T-cell (primary cell): ENCODE measurements at regions of chr6 and their contacts with region 1.

Region 1: DNA sequence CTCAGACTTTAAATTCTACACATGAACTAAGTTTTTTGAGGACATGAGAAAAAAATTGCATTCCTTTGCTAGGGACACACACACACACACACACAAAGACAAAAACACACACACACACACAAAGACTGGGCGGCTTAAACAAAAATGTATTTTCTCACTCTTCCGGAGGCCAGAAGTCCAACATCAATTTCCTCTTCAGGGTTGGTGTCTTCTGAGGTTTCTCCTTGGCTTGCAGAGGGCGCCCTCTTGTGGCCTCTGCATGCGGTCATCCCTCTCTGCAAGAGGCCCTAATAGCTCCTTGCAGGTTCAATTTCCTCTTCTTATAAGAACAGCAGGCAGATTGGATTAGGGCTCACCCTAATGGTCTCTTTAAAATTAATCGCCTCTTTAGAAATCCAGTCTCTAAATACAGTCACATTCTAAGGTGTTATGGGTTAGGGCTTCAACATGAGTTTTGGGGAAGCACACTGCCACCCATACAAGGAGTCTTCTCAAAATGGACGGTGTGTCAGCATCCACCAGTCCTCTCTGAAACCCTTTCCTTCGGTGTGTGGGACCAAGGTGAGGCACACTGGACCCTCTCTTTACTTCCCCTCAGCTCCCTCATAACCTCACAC is 61.4 kb downstream of the GPR6 start:
- DNase-seq: peak; percentile 56 to 89 (median 73)
- ATAC-seq: peak; percentile 82 to 85 (median 83)
- H3K4me3 ChIP-seq: peak overlapping the region; percentile 48 to 68
- H3K4me3 Mint-ChIP-seq: peak overlapping the region; percentile 77 to 90 (median 88)
- H3K27ac ChIP-seq: peak overlapping the region; percentile 80
- H3K27ac Mint-ChIP-seq: peak overlapping the region; percentile 97 to 98
- H3K4me1 ChIP-seq: peaks cover 0 to 17% of the 10 kb centered on the region in 2 experiments
- H3K4me1 Mint-ChIP-seq: peaks cover 10 to 16% (median 15%) of the 10 kb centered on the region in 3 donors
- H3K27me3 ChIP-seq: no peaks in the 10 kb centered on the region
- H3K27me3 Mint-ChIP-seq: no peaks in the 10 kb centered on the region

Region 2: DNA sequence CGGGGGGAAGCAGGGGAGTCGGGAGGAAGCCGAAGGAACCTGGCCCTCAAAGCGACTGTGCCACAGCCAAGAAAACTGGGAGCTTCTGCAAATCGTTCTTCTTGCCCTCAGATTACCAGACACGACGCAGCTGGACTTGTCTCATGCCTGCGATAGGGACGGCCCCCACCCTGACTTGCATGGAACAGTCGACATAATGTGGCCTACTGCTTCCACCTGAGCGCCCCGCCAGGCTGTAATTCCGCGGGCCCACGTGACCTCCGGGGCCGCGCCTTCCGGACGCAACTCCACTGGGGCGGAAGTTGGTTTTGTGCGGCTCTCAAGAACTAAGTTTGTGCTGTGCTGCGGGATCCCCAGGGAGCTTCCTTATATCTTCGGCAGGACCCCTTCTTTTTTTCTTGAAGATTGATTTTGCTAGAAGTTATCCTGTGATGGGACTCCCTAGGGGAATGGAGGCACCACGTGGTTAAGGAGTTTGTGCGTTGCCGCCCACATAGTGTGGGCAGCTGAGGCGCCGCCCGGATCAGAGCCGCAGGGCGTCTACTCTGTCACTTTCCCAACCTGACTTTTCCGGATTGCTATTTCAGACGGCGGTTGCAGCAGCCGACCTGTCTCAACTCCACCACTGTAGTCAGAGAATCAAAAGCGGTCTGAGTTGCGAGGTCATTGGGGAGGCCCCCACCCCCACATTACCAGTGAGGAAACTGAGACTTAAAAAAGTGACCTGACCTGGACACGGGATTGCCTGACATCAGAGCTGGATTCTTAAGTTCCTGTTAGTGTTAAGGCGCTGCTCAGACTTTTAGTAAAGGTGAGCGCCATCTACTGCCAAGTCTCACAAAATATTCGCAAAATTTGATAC is 656.7 kb before region 1 on chr6:
- CTCF ChIA-PET with region 1: interaction called, 9 to 10 read pairs
- POLR2A ChIA-PET with region 1: no interaction called
- DNase-seq: peak; percentile 88 to 96 (median 93)
- ATAC-seq: peak; percentile 75 to 83 (median 80)
- H3K4me3 ChIP-seq: peak overlapping the region; percentile 94 to 98
- H3K4me3 Mint-ChIP-seq: peak overlapping the region; percentile 87 to 98 (median 94)
- H3K27ac ChIP-seq: peak overlapping the region; percentile 95
- H3K27ac Mint-ChIP-seq: peak overlapping the region; percentile 99
- H3K4me1 ChIP-seq: peaks cover 16 to 30% of the 10 kb centered on the region in 2 experiments
- H3K4me1 Mint-ChIP-seq: peaks cover 45 to 53% (median 48%) of the 10 kb centered on the region in 3 donors
- H3K27me3 ChIP-seq: no peaks in the 10 kb centered on the region
- H3K27me3 Mint-ChIP-seq: no peaks in the 10 kb centered on the region

Region 3: GRCh38 chr6:109705258-109705657 is 334.2 kb before region 1 on chr6:
- CTCF ChIA-PET with region 1: interaction called, 11 to 60 read pairs
- POLR2A ChIA-PET with region 1: no interaction called
- DNase-seq: peak; percentile 41 to 87 (median 67)
- ATAC-seq: peak; percentile 87 to 96 (median 90)
- H3K4me3 ChIP-seq: no peak overlapping the region
- H3K4me3 Mint-ChIP-seq: no peak overlapping the region
- H3K27ac ChIP-seq: no peak overlapping the region
- H3K27ac Mint-ChIP-seq: peak overlapping the region in 1 of 2 donors; percentile 11
- H3K4me1 ChIP-seq: peaks cover 3 to 4% of the 10 kb centered on the region in 2 experiments
- H3K4me1 Mint-ChIP-seq: peaks cover 30 to 42% (median 33%) of the 10 kb centered on the region in 3 donors
- H3K27me3 ChIP-seq: no peaks in the 10 kb centered on the region
- H3K27me3 Mint-ChIP-seq: no peaks in the 10 kb centered on the region

Region 4: GRCh38 chr6:110179401-110180227 is 140.1 kb after region 1 on chr6 and contains the start of gene WASF1:
- CTCF ChIA-PET with region 1: interaction called in 1 of 2 experiments, 13 read pairs
- POLR2A ChIA-PET with region 1: interaction called in 1 of 2 experiments, 9 read pairs
- DNase-seq: peak; percentile 82 to 94 (median 86)
- ATAC-seq: peak; percentile 86 to 92 (median 88)
- H3K4me3 ChIP-seq: peak within 1 kb of the TSS; percentile 86 to 88
- H3K4me3 Mint-ChIP-seq: peak within 1 kb of the TSS in 2 of 3 donors; percentile 79 to 84
- H3K27ac ChIP-seq: peak within 1 kb of the TSS; percentile 79
- H3K27ac Mint-ChIP-seq: peak within 1 kb of the TSS; percentile 29 to 42
- H3K4me1 ChIP-seq: peaks cover 23 to 31% of the 10 kb centered on the region in 2 experiments
- H3K4me1 Mint-ChIP-seq: peaks cover 5 to 8% (median 7%) of the 10 kb centered on the region in 3 donors
- H3K27me3 ChIP-seq: no peaks in the 10 kb centered on the region
- H3K27me3 Mint-ChIP-seq: peaks cover 3 to 13% of the 10 kb centered on the region in 2 donors
- total RNA-seq, gene WASF1: 0.23 to 1.2 (median 1.0) TPM